IMR-90 (cell line): ENCODE measurements at regions of chr9 and their contacts with region 1.

Region 1: GRCh38 chr9:134325817-134326723 is at the start of gene RXRA:
- DNase-seq: peak; percentile 80
- ATAC-seq: peak; percentile 74
- H3K4me3 ChIP-seq: peak within 1 kb of the TSS; percentile 79
- H3K27ac ChIP-seq: peak within 1 kb of the TSS; percentile 99
- H3K4me1 ChIP-seq: peaks cover 41% of the 10 kb centered on the region
- H3K27me3 ChIP-seq: no peaks in the 10 kb centered on the region
- CTCF ChIP-seq: peak; percentile 38
- POLR2A ChIP-seq: peak; percentile 84
- RAD21 ChIP-seq: 0 out of 2 replicates have a peak, but pooled peaks have one; percentile 10
- total RNA-seq, gene RXRA: 7.5 and 8.1 TPM in 2 replicates

Region 2: DNA sequence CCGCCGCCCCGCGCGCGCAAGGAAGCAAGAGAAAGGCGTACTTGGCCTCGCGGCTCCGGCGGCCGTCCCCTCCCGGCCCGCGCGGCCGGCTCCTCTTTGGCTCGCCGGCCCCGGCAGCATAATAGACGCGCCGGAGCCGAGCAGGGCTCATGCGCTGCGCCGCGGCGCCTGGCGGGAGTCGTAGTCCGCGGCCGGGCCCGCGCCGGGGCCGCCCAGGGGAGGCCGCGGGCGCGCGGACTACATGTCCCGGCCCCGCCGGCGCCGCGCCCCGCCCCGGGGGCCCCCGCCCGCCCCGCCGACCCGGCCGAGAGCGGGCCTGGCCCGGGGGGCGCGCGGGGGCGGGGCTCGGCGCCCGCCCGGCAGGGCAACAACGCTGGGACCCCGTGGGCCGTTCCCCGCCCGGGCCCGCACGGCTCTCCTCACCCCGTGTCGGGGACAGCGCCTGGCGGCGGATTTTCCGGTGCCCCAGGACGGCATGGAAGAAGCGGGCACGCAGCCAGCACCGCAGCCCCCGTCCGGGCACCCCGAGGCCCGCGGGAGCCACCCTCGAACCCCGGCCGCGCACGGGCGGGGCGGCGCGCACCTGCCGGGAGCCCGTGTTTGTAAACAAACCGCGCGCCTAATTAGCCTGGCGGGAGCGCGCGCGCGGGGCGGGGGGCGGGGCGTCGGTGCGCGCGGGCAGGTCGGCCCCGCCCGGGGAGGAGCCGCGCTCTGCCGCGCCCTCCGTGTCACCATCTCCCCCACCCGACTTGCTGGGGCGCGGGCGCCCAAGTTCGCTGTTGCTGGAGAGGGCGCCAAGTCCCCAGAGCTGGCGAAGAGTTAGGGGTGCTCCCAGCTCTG is 257.9 kb before region 1 on chr9 and contains the start of gene BRD3:
- CTCF ChIA-PET with region 1: no interaction called
- POLR2A ChIA-PET with region 1: no interaction called
- dilution Hi-C with region 1: no loop called
- in situ Hi-C with region 1: no loop called
- intact Hi-C with region 1: loop called (anchors 10 kb)
- DNase-seq: peak; percentile 88
- ATAC-seq: peak; percentile 91
- H3K4me3 ChIP-seq: peak within 1 kb of the TSS; percentile 96
- H3K27ac ChIP-seq: peak within 1 kb of the TSS; percentile 81
- H3K4me1 ChIP-seq: peaks cover 7% of the 10 kb centered on the region
- H3K27me3 ChIP-seq: peaks cover 29% of the 10 kb centered on the region
- CTCF ChIP-seq: no peak
- POLR2A ChIP-seq: peak; percentile 51; the same call in 1 of the 2 replicates
- RAD21 ChIP-seq: no peak
- total RNA-seq, gene BRD3: 2.2 and 3.6 TPM in 2 replicates

Region 3: GRCh38 chr9:134163353-134164196 is 162.5 kb before region 1 on chr9:
- CTCF ChIA-PET with region 1: no interaction called
- POLR2A ChIA-PET with region 1: interaction called, 3 read pairs
- dilution Hi-C with region 1: no loop called
- in situ Hi-C with region 1: loop called (anchors 5 kb)
- intact Hi-C with region 1: no loop called
- DNase-seq: peak; percentile 22
- ATAC-seq: no peak
- H3K4me3 ChIP-seq: peak overlapping the region; percentile 24
- H3K27ac ChIP-seq: peak overlapping the region; percentile 67
- H3K4me1 ChIP-seq: peaks cover 5% of the 10 kb centered on the region
- H3K27me3 ChIP-seq: no peaks in the 10 kb centered on the region
- CTCF ChIP-seq: no peak
- POLR2A ChIP-seq: no peak
- RAD21 ChIP-seq: no peak

Region 4: DNA sequence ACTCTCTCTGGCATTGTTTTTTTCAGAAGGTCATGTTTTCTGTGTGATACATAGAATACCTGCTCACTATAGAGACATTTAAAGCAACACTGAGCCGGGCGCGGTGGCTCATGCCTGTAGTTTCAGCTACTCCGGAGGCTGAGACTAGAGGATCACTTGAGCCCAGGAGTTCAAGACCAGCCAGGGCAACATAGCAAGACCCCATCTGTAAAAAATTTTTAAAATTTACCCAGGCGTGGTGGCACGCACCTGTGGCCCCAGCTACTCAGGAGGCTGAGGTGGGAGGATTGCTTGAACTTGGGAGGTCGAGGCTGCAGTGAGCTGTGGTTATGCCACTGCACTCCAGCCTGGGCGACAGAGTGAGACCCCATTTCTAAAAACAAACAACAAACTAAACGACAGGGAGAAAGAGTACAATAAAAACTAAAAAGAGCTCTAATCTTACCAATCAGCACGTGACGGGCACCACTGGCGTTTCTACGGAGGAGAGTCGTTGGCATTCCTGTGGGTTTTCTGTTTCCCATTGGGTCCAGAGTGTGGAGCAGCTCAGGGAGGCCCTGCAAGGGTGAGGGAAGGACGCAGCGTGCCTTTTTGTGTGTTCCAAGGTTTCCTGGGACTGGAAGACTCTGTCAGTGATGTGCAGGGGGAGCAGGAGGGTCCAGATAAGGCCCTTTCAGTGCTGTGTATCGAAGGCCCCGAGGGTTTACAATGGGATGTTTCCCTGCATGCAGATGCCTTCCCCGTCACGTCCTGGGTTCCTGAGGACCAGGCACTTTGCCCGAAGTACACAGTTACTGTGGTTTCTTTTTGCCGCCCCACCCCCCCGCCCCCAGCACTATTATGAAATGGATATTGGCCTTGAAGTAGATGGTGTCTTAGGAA is 154.5 kb before region 1 on chr9:
- CTCF ChIA-PET with region 1: interaction called, 9 read pairs
- POLR2A ChIA-PET with region 1: no interaction called
- dilution Hi-C with region 1: no loop called
- in situ Hi-C with region 1: loop called (anchors 5 kb)
- intact Hi-C with region 1: loop called (anchors 1 kb)
- DNase-seq: peak; percentile 28
- ATAC-seq: 0 out of 2 replicates have a peak, but pooled peaks have one; percentile 3
- H3K4me3 ChIP-seq: no peak overlapping the region
- H3K27ac ChIP-seq: peak overlapping the region; percentile 69; the same call in 1 of the 2 replicates
- H3K4me1 ChIP-seq: peaks cover 12% of the 10 kb centered on the region
- H3K27me3 ChIP-seq: peaks cover 8% of the 10 kb centered on the region
- CTCF ChIP-seq: no peak
- POLR2A ChIP-seq: no peak
- RAD21 ChIP-seq: no peak

Region 5: DNA sequence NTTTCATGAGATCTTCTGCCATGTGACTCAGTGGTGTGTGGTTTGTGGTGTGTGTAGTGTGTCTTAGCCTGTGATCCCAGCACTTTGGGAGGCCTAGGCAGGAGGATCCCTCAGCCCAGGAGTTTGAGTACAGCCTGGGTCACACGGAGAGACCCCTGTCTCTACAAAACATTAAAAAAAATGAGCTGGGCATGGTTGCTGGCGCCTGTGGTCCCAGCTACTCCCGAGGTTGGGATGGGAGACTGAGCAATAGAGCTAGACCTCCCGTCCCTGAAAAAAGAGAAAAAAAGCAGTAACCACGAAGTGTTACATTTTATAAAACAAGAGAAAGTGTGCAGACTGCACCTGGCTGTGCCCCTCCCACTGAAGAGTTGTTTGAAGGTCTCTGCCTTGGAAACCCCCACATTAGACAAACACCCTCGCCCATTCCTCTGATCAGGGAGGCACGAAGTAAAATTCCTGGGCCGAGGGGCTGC is 140.5 kb before region 1 on chr9:
- CTCF ChIA-PET with region 1: no interaction called
- POLR2A ChIA-PET with region 1: no interaction called
- dilution Hi-C with region 1: no loop called
- in situ Hi-C with region 1: no loop called
- intact Hi-C with region 1: loop called (anchors 5 kb)
- DNase-seq: no peak
- ATAC-seq: no peak
- H3K4me3 ChIP-seq: no peak overlapping the region
- H3K27ac ChIP-seq: no peak overlapping the region
- H3K4me1 ChIP-seq: peaks cover 12% of the 10 kb centered on the region; the same call in 1 of the 2 replicates
- H3K27me3 ChIP-seq: peaks cover 26% of the 10 kb centered on the region
- CTCF ChIP-seq: no peak
- POLR2A ChIP-seq: no peak
- RAD21 ChIP-seq: no peak

Region 6: GRCh38 chr9:134443168-134444037 is 117.3 kb after region 1 on chr9:
- CTCF ChIA-PET with region 1: interaction called, 8 read pairs
- POLR2A ChIA-PET with region 1: no interaction called
- dilution Hi-C with region 1: no loop called
- in situ Hi-C with region 1: no loop called
- intact Hi-C with region 1: loop called (anchors 2 kb)
- DNase-seq: peak; percentile 93
- ATAC-seq: peak; percentile 93
- H3K4me3 ChIP-seq: no peak overlapping the region
- H3K27ac ChIP-seq: no peak overlapping the region
- H3K4me1 ChIP-seq: peaks cover 17% of the 10 kb centered on the region
- H3K27me3 ChIP-seq: no peaks in the 10 kb centered on the region
- CTCF ChIP-seq: peak; percentile 96
- POLR2A ChIP-seq: peak; percentile 50; the same call in 1 of the 2 replicates
- RAD21 ChIP-seq: peak; percentile 99